CD8-positive, alpha-beta T cell (primary cell): ENCODE measurements at regions of chr9 and their contacts with region 1.

Region 1: DNA sequence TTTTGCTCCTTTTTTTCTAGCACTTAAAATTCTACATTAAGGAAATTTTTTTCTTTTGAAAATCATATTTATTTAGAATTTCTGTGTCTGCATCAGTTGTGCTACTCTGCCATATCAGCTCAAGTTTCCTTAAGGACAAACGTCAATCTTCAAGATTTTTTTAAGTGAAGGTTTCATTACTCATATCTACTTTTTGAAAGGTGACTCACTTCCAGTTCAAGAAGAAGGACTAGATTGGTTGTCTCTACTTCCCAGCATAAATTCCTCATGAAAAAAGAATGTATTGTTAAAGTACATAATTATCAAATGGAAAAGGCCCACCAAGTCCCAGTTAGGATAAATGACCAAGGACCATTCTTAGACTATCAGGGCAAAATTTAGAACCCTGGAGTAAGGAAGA is 626.5 kb downstream of the DMRTA1 start:
- DNase-seq: no peak
- ATAC-seq: no peak
- H3K4me3 ChIP-seq: no peak overlapping the region
- H3K4me3 Mint-ChIP-seq: no peak overlapping the region
- H3K27ac ChIP-seq: no peak overlapping the region
- H3K27ac Mint-ChIP-seq: no peak overlapping the region
- H3K4me1 ChIP-seq: no peaks in the 10 kb centered on the region
- H3K4me1 Mint-ChIP-seq: no peaks in the 10 kb centered on the region
- H3K27me3 ChIP-seq: no peaks in the 10 kb centered on the region
- H3K27me3 Mint-ChIP-seq: no peaks in the 10 kb centered on the region
- CTCF ChIP-seq: no peak

Region 2: DNA sequence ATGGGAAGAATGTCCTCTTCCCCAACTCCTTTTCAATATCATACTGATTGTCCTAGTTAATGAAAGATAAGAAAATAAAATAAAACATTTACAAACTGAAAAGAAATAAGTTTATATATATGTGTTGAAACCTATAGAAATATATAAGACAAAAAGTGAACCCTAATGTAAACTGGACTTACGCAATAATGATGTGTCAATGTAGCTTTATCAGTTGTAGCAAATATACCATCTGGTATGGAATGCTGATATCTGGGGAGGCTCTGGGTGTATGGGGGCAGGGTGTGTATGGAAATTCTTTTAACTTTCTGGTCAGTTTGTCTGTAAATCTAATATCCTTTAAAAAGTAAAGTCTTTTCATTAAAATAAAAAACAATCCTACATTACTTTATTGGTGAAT is 22.6 kb before region 1 on chr9:
- CTCF ChIA-PET with region 1: no interaction called
- POLR2A ChIA-PET with region 1: no interaction called
- intact Hi-C with region 1: loop called in 1 of 2 experiments (anchors 1 kb)
- DNase-seq: no peak
- ATAC-seq: no peak
- H3K4me3 ChIP-seq: no peak overlapping the region
- H3K4me3 Mint-ChIP-seq: no peak overlapping the region
- H3K27ac ChIP-seq: no peak overlapping the region
- H3K27ac Mint-ChIP-seq: no peak overlapping the region
- H3K4me1 ChIP-seq: no peaks in the 10 kb centered on the region
- H3K4me1 Mint-ChIP-seq: no peaks in the 10 kb centered on the region
- H3K27me3 ChIP-seq: no peaks in the 10 kb centered on the region
- H3K27me3 Mint-ChIP-seq: no peaks in the 10 kb centered on the region
- CTCF ChIP-seq: no peak

Region 3: GRCh38 chr9:23123048-23123632 is 50.0 kb after region 1 on chr9:
- CTCF ChIA-PET with region 1: no interaction called
- POLR2A ChIA-PET with region 1: no interaction called
- intact Hi-C with region 1: no loop called
- DNase-seq: no peak
- ATAC-seq: no peak
- H3K4me3 ChIP-seq: no peak overlapping the region
- H3K4me3 Mint-ChIP-seq: no peak overlapping the region
- H3K27ac ChIP-seq: no peak overlapping the region
- H3K27ac Mint-ChIP-seq: no peak overlapping the region
- H3K4me1 ChIP-seq: no peaks in the 10 kb centered on the region
- H3K4me1 Mint-ChIP-seq: no peaks in the 10 kb centered on the region
- H3K27me3 ChIP-seq: no peaks in the 10 kb centered on the region
- H3K27me3 Mint-ChIP-seq: no peaks in the 10 kb centered on the region
- CTCF ChIP-seq: no peak

Region 4: DNA sequence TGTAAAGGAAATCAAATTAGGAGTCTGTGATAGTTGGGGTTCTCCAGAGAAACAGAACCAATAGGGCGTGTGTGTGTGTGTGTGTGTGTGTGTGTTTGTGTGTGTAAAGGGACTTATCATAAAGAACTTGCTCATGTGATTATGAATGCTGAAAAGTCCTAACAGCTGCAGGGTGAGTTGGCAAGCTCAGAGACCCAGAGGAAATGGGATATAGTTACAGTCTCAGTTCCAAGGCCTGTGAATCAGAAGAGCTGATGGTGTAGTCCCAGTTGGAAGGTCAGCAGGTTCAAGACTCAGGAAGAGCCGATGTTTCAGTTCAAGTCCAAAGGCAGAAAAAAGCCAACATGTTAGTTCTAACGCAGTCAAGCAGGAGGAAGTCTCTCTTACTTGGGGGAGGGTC is 538.7 kb after region 1 on chr9:
- CTCF ChIA-PET with region 1: no interaction called
- POLR2A ChIA-PET with region 1: no interaction called
- intact Hi-C with region 1: no loop called
- DNase-seq: no peak
- ATAC-seq: no peak
- H3K4me3 ChIP-seq: no peak overlapping the region
- H3K4me3 Mint-ChIP-seq: no peak overlapping the region
- H3K27ac ChIP-seq: no peak overlapping the region
- H3K27ac Mint-ChIP-seq: no peak overlapping the region
- H3K4me1 ChIP-seq: no peaks in the 10 kb centered on the region
- H3K4me1 Mint-ChIP-seq: no peaks in the 10 kb centered on the region
- H3K27me3 ChIP-seq: no peaks in the 10 kb centered on the region
- H3K27me3 Mint-ChIP-seq: no peaks in the 10 kb centered on the region
- CTCF ChIP-seq: no peak